PC-9 (cell line): ENCODE measurements at regions of chr17 and their contacts with region 1.

Region 1: DNA sequence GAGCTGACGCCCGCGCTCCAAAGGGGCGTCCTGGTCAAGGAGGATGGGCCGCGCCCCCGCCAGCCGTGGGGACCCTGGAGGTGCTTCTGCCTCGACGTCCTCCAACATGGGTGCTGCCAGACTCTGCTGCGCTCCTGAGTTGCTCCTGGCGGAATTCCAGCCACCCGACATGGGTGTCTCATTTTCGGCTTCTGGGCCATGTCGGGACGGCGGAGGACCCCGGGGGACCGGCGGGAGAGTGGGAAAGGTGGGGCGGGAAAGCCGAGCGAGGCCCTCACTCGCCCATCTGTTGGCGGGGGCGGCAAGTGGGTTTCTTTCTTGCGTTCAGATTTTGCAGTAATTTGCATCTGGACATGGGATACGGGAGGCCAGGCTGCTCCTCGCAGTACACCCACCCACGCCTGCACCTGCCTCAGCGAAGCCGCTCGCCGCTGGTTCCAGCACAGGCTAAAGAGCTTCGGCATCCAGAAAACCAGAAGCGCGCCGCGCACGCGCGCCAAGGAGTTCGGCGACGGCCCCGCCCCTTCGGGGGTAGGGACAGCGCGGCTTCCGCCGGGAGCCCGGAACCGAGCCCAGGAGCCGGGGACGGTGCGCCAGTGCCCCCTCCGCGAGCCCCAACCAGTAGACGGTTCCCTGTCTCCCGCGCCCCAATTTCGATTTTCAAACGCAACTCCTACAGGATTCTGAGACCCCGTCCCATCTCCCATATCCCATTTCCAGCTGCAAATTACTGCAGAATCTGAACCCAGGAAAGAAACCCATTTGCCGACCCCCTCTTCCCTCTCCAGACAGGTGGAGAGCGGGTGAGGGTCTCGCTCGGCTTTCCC is at the start of gene ARMC7:
- DNase-seq: peak; percentile 69 to 92
- H3K4me3 ChIP-seq: peak within 1 kb of the TSS; percentile 59
- H3K27ac ChIP-seq: peak within 1 kb of the TSS; percentile 44; the same call in 1 of the 2 replicates
- H3K4me1 ChIP-seq: peaks cover 12% of the 10 kb centered on the region; the same call in 1 of the 2 replicates
- H3K27me3 ChIP-seq: no peaks in the 10 kb centered on the region
- CTCF ChIP-seq: no peak
- total RNA-seq, gene ARMC7: 19.2 and 20.5 TPM in 2 replicates

Region 2: GRCh38 chr17:74545843-74546230 is 563.8 kb before region 1 on chr17 and contains the start of gene CD300C:
- CTCF ChIA-PET with region 1: no interaction called
- POLR2A ChIA-PET with region 1: no interaction called
- intact Hi-C with region 1: no loop called
- DNase-seq: no peak
- H3K4me3 ChIP-seq: no peak within 1 kb of the TSS
- H3K27ac ChIP-seq: no peak within 1 kb of the TSS
- H3K4me1 ChIP-seq: no peaks in the 10 kb centered on the region
- H3K27me3 ChIP-seq: peaks cover 100% of the 10 kb centered on the region
- CTCF ChIP-seq: no peak
- total RNA-seq, gene CD300C: not detected in 2 replicates

Region 3: DNA sequence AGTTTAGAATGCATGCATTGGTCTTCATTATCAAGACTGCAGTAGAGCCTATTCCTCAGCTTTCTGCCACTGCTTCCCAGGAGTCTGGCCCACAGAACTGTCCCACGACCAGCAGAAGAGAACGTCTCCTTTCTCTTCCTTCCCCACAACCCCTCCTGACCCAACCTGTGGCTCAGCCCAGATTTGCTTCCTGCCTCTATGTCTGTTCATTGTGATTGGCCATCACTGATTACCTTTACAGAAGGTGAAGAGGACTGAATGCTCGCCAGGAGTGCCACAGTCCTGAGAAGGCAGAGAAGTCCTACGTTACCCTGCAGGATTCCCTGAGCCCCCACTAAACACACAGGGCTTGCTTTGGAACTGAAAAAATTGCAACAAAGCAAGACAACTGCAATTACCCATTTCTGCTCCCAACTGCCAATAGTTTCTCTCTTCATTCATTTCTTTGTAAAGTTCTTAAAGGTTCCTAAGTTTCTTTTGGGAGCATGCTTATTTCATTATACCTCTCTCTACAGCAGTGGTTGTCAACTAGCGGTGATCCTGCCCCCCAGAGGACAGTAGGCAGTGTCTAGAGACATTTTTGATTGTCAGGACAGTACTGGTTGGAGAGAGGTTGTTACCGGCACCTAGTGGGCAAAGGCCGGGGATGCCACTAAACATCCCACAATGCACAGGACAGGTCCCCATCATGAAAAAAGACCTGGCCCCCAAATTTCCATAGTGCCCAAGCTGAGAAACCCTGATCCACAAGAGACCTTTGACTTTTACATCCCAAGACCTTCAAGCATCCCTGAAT is 329.0 kb before region 1 on chr17:
- CTCF ChIA-PET with region 1: no interaction called
- POLR2A ChIA-PET with region 1: no interaction called
- intact Hi-C with region 1: no loop called
- DNase-seq: peak; percentile 19 to 34
- H3K4me3 ChIP-seq: no peak overlapping the region
- H3K27ac ChIP-seq: no peak overlapping the region
- H3K4me1 ChIP-seq: peaks cover 8% of the 10 kb centered on the region; the same call in 1 of the 2 replicates
- H3K27me3 ChIP-seq: no peaks in the 10 kb centered on the region
- CTCF ChIP-seq: peak; percentile 38; the same call in 1 of the 2 replicates

Region 4: GRCh38 chr17:75059369-75060345 is 50.0 kb before region 1 on chr17:
- CTCF ChIA-PET with region 1: interaction called, 6 read pairs
- POLR2A ChIA-PET with region 1: interaction called, 9 read pairs
- intact Hi-C with region 1: loop called (anchors 2 kb)
- DNase-seq: peak in 1 of 2 experiments; percentile 46
- H3K4me3 ChIP-seq: no peak overlapping the region
- H3K27ac ChIP-seq: no peak overlapping the region
- H3K4me1 ChIP-seq: no peaks in the 10 kb centered on the region
- H3K27me3 ChIP-seq: no peaks in the 10 kb centered on the region
- CTCF ChIP-seq: peak; percentile 55; the same call in 1 of the 2 replicates

Region 5: GRCh38 chr17:75096082-75096625 is 13.5 kb before region 1 on chr17:
- CTCF ChIA-PET with region 1: interaction called, 6 read pairs
- POLR2A ChIA-PET with region 1: no interaction called
- intact Hi-C with region 1: loop called (anchors 1 kb)
- DNase-seq: peak; percentile 89 to 99
- H3K4me3 ChIP-seq: no peak overlapping the region; the same call in 1 of the 2 replicates
- H3K27ac ChIP-seq: peak overlapping the region; percentile 89
- H3K4me1 ChIP-seq: peaks cover 58% of the 10 kb centered on the region
- H3K27me3 ChIP-seq: no peaks in the 10 kb centered on the region
- CTCF ChIP-seq: no peak

Region 6: DNA sequence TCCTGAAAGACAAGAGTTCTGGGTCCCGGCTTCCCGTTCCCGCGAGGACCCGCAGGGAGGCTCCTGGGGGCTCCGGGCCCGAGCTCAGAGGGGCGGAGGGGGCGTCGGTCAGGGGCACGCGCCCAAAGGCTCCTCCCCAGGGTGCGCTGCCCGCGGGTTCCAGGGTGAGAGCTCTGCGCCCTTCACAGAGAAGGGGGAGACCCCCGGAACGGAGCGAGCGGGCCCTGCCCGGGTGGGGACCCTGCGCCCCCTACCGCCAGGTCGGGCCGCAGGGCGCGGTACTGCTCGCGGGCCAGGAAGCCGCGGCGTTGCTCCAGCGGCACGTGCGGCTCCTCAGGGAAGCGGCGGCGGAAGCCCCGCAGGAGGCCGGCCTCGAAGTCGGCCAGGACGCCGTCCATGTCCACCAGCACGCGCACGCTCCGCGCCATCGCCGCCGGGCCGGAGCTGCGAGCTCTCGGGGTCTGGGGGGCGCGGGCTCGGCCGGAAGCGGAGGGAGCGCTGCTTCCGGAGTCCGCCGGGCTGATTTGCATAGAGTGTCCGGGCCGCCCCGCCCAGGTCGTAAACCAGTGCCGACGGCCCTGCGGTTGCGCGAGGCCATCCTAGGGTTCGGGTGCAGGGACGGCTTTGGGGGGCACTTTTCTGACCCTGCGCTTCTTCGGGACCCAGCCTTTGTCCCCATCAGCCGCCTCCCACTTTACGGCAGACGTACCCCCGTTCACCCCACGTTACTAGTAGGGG is 21.8 kb after region 1 on chr17 and contains the start of gene NT5C:
- CTCF ChIA-PET with region 1: interaction called, 18 read pairs
- POLR2A ChIA-PET with region 1: no interaction called
- intact Hi-C with region 1: no loop called
- DNase-seq: peak; percentile 62 to 71
- H3K4me3 ChIP-seq: peak within 1 kb of the TSS; percentile 95
- H3K27ac ChIP-seq: peak within 1 kb of the TSS; percentile 72
- H3K4me1 ChIP-seq: peaks cover 20% of the 10 kb centered on the region
- H3K27me3 ChIP-seq: no peaks in the 10 kb centered on the region
- CTCF ChIP-seq: peak; percentile 65
- total RNA-seq, gene NT5C: 38.6 and 52.3 TPM in 2 replicates

Region 7: GRCh38 chr17:75199886-75200618 is 90.4 kb after region 1 on chr17:
- CTCF ChIA-PET with region 1: interaction called, 19 read pairs
- POLR2A ChIA-PET with region 1: interaction called, 8 read pairs
- intact Hi-C with region 1: loop called (anchors 1 kb)
- DNase-seq: no peak
- H3K4me3 ChIP-seq: no peak overlapping the region
- H3K27ac ChIP-seq: peak overlapping the region; percentile 58; the same call in 1 of the 2 replicates
- H3K4me1 ChIP-seq: peaks cover 8% of the 10 kb centered on the region
- H3K27me3 ChIP-seq: no peaks in the 10 kb centered on the region
- CTCF ChIP-seq: no peak